ENCODE measurements at regions of chr17 and their contacts with region 1.

Region 1: DNA sequence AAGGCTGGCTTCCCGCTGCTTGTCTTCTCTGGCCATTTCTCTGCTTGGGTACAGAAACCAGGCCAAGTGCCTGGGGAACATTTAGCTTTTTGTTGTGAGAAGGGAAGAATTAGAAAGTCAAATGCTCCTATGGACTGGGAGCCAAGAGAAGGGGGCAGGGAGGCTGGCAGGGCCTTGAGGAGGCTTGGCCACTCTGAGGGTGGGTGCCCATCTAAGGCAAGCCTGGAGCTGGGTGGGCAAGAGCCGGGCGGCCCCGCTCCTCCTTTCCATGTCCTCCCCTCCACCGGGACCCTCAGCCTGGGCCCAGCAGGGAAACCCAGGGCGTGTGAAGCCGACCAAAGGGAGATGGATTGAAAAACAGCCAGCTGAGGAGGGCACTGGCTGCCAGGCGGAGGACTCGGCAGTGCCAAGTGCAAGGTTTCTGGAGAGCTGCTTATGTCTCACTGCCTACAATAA is 69.4 kb downstream of the NTN1 start:
- DNase-seq: peak; percentile 75 to 83
- ATAC-seq: peak; percentile 85
- H3K4me3 ChIP-seq: no peak overlapping the region
- H3K27ac ChIP-seq: peak overlapping the region; percentile 69 to 74
- H3K4me1 ChIP-seq: peaks cover 5% of the 10 kb centered on the region in 2 donors
- H3K27me3 ChIP-seq: no peaks in the 10 kb centered on the region

Region 2: GRCh38 chr17:9150446-9151090 is 59.9 kb after region 1 on chr17:
- intact Hi-C with region 1: no loop called
- DNase-seq: peak in 1 of 2 donors; percentile 83
- ATAC-seq: peak; percentile 62
- H3K4me3 ChIP-seq: no peak overlapping the region
- H3K27ac ChIP-seq: peak overlapping the region; percentile 17 to 72
- H3K4me1 ChIP-seq: peaks cover 0 to 6% of the 10 kb centered on the region in 2 donors
- H3K27me3 ChIP-seq: no peaks in the 10 kb centered on the region

Region 3: GRCh38 chr17:9228408-9229151 is 137.9 kb after region 1 on chr17:
- intact Hi-C with region 1: loop called in 1 of 2 experiments (anchors 5 kb)
- DNase-seq: peak in 1 of 2 donors; percentile 54
- ATAC-seq: peak; percentile 67
- H3K4me3 ChIP-seq: no peak overlapping the region
- H3K27ac ChIP-seq: peak overlapping the region; percentile 77 to 80
- H3K4me1 ChIP-seq: peaks cover 0 to 2% of the 10 kb centered on the region in 2 donors
- H3K27me3 ChIP-seq: no peaks in the 10 kb centered on the region

Measured in aorta (tissue), 5 donors.